MCF 10A (cell line): ENCODE measurements at regions of chrX and their contacts with region 1.

Region 1: DNA sequence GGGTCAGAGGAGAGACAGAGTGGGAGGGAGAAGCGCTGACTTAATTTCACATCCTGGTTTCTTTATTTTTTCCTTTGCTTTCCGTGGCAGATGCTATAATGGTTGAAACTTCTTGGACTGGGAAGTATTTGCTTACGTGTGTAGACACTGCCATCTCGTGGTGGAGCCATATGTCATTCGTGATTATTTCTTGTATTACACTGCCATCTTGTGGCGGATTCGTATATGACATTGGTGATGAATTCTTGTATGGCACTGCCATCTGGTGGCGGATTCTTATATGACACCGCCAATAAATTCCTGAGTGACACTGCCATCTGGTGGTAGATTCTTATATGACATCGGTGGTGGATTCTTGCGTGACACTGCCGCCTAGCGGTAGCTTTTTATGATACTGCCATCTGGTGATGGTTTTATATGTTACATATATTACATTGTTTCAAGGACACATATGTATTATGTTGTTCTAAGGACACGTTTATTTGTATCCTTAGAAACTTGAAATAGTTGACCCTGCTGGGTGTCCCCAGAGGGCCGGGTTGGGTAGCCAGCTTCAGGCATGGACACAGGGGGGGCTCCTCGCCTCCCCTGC is 37.3 kb upstream of the CLCN4 start:
- DNase-seq: peak; percentile 80
- H3K4me3 Mint-ChIP-seq: no peak overlapping the region
- H3K27ac Mint-ChIP-seq: no peak overlapping the region
- H3K4me1 Mint-ChIP-seq: no peaks in the 10 kb centered on the region
- H3K27me3 Mint-ChIP-seq: no peaks in the 10 kb centered on the region
- CTCF ChIP-seq: peak; percentile 100

Region 2: DNA sequence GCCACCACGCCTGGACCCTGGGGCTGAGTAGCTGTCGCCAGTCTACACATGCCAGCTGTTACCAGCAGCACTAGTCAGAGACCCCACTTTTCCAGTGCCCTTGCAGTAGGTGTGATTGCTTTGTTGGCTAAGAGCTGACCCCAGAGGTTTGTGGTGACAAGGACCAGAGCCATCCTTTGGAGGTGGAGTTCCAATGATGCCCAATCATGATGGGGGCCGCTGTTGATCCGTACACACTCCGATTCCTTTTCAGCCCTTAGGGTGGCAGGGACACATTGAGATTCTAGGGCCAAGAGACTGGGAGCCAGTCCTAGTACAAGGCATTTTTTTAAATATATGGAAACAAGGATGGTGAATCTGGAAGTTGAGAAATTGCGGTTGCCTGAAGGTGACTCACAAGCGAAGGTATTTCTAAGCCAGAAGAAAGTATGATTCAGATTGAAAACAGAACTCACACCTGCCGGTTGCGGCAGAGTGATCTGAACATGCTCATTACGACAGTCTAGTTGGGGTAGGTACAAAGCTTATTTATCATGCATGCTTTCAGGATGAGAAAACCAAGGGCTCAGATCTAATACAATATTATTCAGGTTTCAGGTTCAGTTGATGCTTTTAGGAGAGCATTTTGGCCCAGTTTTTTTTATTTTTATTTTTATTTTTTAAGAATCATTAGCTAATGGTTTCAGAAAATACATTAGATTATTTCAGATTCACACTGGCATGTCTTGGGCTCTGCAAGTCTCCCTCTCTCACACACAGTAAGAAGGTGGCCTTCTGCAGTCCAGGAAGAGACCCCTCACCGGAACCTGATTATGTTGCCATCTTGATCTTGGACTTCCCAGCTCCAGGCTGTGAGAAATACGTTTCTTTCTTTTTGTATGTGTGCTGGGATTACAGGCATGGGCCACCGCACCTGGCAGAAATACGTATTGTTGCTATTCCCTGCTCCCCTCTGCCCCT is 289.9 kb before region 1 on chrX:
- CTCF ChIA-PET with region 1: interaction called, 8 read pairs
- POLR2A ChIA-PET with region 1: no interaction called
- intact Hi-C with region 1: loop called (anchors 1 kb)
- DNase-seq: peak; percentile 97
- H3K4me3 Mint-ChIP-seq: no peak overlapping the region
- H3K27ac Mint-ChIP-seq: peak overlapping the region; percentile 59
- H3K4me1 Mint-ChIP-seq: peaks cover 6% of the 10 kb centered on the region
- H3K27me3 Mint-ChIP-seq: no peaks in the 10 kb centered on the region
- CTCF ChIP-seq: no peak

Region 3: DNA sequence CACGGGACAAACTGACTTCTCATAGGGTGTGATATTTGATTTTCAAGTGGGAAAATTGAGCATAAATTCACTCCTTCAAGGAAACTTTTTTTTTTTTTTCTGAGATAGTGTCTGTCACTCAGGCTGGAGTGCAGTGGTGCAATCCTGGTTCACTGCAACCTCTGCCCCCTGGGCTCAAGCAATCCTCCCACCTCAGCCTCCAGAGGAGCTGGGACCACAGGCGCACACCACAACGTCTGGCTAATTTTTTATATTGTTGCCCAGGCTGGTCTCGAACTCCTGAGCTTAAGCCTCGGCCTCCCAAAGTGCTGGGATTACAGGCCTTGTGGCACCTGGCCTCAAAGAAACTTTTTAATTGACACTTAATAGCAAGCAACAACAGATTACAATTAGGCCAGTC is 138.6 kb before region 1 on chrX:
- CTCF ChIA-PET with region 1: interaction called, 17 read pairs
- POLR2A ChIA-PET with region 1: no interaction called
- intact Hi-C with region 1: no loop called
- DNase-seq: no peak
- H3K4me3 Mint-ChIP-seq: no peak overlapping the region
- H3K27ac Mint-ChIP-seq: no peak overlapping the region
- H3K4me1 Mint-ChIP-seq: no peaks in the 10 kb centered on the region
- H3K27me3 Mint-ChIP-seq: peaks cover 11% of the 10 kb centered on the region
- CTCF ChIP-seq: no peak

Region 4: DNA sequence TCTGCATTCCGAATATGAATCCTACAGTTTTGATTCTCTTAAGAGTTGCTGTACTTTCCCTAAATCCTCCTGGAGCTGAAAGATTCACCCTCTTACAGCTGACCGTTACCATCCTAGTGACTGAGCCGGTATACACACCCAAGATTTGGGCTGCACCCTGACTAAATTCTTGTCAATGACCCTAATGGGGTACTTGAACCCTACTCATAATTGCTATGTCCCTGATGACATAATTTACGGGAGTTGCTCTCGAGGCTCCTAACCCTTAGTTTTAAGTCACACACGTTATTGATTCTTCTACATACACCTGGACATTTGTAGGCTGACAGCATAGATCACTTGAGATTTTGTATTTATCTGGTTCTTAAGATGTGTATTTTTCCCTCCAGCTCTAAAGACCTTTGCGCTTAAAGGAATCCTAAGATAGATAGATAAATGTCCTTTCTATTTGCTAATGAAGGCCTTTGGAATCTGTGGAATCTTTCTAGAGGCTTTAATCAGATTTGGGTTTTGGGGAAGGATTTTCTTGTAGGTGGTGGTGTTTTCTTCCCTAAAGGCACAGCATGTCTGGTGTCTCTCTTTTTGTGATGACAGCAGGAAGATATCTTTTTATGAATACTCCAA is 114.5 kb before region 1 on chrX:
- CTCF ChIA-PET with region 1: interaction called, 178 read pairs
- POLR2A ChIA-PET with region 1: no interaction called
- intact Hi-C with region 1: no loop called
- DNase-seq: no peak
- H3K4me3 Mint-ChIP-seq: no peak overlapping the region
- H3K27ac Mint-ChIP-seq: no peak overlapping the region
- H3K4me1 Mint-ChIP-seq: peaks cover 13% of the 10 kb centered on the region
- H3K27me3 Mint-ChIP-seq: no peaks in the 10 kb centered on the region
- CTCF ChIP-seq: no peak

Region 5: DNA sequence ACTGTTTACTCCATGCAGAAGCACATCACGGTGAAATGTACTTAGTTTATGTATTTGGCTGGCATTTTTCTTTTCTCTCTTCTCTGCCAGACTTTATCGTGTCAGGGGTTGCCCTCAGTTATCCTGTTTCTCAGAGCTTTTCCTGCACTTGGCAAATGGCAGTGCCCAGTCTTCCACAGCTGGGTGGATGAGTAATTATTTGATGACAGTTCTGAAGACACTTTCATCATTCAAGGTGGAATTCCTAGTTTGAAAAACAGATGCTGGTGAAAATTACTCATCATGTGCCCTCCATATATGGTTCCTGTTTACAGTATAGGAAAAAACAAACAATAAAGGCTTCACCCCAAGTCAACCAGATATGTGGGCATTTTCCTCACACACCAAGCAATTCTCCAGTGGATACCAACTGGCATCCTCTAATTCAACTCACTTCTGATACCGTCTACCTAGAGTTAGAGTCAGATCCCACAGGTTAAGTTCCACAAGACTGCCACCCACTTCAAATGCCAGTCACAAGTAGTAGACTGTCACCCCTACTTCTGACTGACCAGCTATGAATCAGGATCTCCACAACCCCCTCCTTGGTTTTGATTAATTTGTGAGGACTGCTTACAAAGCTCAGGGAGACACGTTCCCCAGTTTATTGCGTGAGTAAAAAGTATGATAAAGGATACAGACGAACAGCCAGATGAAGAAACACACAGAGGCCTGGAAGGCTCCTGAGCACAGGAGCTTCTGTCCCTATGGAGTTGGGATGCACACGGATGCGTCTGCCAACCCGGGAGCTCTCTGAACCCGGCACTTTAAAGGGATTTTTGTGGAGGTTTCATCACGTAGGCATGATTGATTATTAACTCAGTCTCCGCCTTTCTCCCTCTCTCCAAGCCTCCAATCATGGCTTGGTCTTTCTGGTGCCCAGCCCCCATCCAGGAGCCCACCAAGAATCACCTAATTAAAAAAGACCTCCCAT is 79.4 kb before region 1 on chrX:
- CTCF ChIA-PET with region 1: interaction called, 10 read pairs
- POLR2A ChIA-PET with region 1: no interaction called
- intact Hi-C with region 1: no loop called
- DNase-seq: peak; percentile 61
- H3K4me3 Mint-ChIP-seq: no peak overlapping the region
- H3K27ac Mint-ChIP-seq: peak overlapping the region; percentile 62
- H3K4me1 Mint-ChIP-seq: peaks cover 9% of the 10 kb centered on the region
- H3K27me3 Mint-ChIP-seq: no peaks in the 10 kb centered on the region
- CTCF ChIP-seq: no peak

Region 6: GRCh38 chrX:10156199-10157031 is 36.9 kb after region 1 on chrX and contains the start of gene CLCN4:
- CTCF ChIA-PET with region 1: interaction called, 10 read pairs
- POLR2A ChIA-PET with region 1: no interaction called
- intact Hi-C with region 1: no loop called
- DNase-seq: peak; percentile 73
- H3K4me3 Mint-ChIP-seq: peak within 1 kb of the TSS; percentile 74
- H3K27ac Mint-ChIP-seq: peak within 1 kb of the TSS; percentile 65
- H3K4me1 Mint-ChIP-seq: peaks cover 7% of the 10 kb centered on the region
- H3K27me3 Mint-ChIP-seq: peaks cover 15% of the 10 kb centered on the region
- CTCF ChIP-seq: no peak
- total RNA-seq, gene CLCN4: 7.3 and 9.3 TPM in 2 replicates